Thyroid gland (tissue), 4 donors: ENCODE measurements at regions of chr10 and their contacts with region 1.

Region 1: GRCh38 chr10:17847585-17848296 is 38.6 kb downstream of the MRC1 start:
- DNase-seq: no peak
- H3K4me3 ChIP-seq: no peak overlapping the region
- H3K27ac ChIP-seq: no peak overlapping the region
- H3K4me1 ChIP-seq: no peaks in the 10 kb centered on the region
- H3K27me3 ChIP-seq: no peaks in the 10 kb centered on the region
- CTCF ChIP-seq: peak in 3 of 6 experiments; percentile 32 to 69 (median 51)
- POLR2A ChIP-seq: no peak

Region 2: GRCh38 chr10:17348501-17349349 is 499.0 kb before region 1 on chr10:
- intact Hi-C with region 1: no loop called
- DNase-seq: peak; percentile 3 to 9
- H3K4me3 ChIP-seq: no peak overlapping the region
- H3K27ac ChIP-seq: no peak overlapping the region
- H3K4me1 ChIP-seq: peaks cover 0 to 4% of the 10 kb centered on the region in 2 donors
- H3K27me3 ChIP-seq: no peaks in the 10 kb centered on the region
- CTCF ChIP-seq: no peak
- POLR2A ChIP-seq: no peak

Region 3: DNA sequence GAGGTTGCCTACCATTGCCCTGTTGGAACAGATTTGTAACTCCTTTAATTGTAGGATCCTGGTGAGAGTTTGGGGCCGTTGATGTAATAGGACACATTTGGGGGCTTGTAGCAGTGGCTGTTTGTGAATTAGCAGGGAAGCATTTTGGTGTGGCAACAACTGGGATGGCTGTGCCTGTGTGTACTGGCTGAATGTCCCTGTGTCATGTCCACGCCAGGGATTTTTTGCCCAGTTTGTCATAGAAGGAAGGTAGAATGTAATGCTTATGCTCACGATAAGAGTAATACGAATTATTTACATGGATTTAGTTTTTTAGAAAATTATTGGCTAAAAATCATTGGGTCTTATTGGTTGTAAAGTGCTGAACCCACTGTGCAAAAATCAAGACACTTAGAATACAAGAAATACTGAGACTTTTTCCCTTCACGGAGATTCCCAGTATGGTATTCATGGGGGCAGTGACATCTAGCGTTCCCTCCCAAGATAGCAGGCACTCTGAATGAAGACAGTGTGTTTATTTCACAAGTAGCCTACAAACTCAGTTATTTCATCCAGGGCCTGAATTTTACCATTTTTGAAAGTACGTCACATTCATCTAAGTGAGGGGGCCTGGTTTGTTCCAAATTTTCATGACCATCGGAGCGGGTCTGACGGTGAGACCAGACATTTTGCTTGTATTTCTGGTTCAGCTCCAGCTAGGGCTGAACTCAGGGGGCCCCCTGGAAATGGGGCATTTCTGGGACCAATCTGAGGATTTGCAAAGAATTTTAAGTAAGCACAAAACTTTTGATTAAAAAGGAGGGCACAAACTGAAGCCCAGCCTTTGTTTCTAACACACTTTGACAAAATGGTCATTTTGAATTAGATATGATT is 367.2 kb after region 1 on chr10:
- intact Hi-C with region 1: loop called (anchors 5 kb)
- DNase-seq: peak; percentile 37 to 55
- H3K4me3 ChIP-seq: no peak overlapping the region
- H3K27ac ChIP-seq: no peak overlapping the region
- H3K4me1 ChIP-seq: no peaks in the 10 kb centered on the region
- H3K27me3 ChIP-seq: no peaks in the 10 kb centered on the region
- CTCF ChIP-seq: peak; percentile 25 to 84 (median 72)
- POLR2A ChIP-seq: no peak